ENCODE measurements at regions of chr11 and their contacts with region 1.

Region 1: GRCh38 chr11:64317957-64318693 is at the start of gene PRDX5:
- DNase-seq: peak; percentile 94 to 97
- ATAC-seq: peak; percentile 80 to 85
- H3K4me3 ChIP-seq: peak within 1 kb of the TSS; percentile 73 to 99 (median 91)
- H3K27ac ChIP-seq: peak within 1 kb of the TSS; percentile 88 to 98 (median 94)
- H3K4me1 ChIP-seq: peaks cover 25 to 36% of the 10 kb centered on the region in 2 donors
- H3K27me3 ChIP-seq: no peaks in the 10 kb centered on the region
- CTCF ChIP-seq: peak in 4 of 5 experiments; percentile 34 to 62 (median 56)
- POLR2A ChIP-seq: peak; percentile 73 to 81
- total RNA-seq, gene PRDX5: 170 to 257 (median 219) TPM

Region 2: DNA sequence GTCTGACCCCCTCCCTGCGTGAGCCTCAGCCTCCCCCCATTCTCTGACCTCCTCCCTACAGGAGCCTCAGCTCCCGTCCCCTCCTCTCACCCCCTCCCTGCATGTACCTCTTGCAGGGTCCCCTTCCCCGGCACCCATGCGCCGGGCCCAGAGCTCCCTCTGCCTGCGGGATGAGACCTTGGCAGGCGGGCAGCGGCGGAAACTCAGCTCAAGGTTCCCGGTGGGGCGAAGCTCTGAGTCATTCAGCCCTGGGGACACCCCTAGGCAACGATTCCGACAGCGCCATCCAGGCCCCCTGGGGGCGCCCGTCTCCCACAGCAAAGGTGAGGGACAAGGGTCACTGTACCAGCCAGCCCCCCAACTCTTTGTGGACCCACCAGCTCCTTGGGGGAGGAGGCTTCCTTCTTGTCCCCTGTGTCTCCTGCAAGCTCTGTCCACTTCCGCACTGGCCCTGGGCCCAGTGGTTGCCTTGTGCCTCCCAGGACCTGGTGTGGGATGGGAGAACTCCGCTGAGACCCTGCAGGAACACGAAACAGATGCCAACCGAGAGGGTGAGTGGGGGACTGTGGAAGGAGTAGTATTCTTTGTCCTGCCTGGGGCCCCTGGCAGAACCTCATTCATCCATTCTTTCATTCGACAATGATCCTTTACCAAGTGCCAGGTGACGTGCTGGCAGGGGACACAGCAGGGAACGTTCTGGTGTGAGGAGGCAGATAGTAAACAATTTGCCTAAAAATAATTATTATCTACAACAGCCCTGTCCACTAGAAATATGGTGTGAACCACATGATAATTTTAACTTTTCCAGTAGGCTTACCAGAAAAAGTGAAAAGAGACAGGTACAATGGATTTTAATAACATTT is 37.2 kb after region 1 on chr11:
- in situ Hi-C with region 1: no loop called
- intact Hi-C with region 1: loop called (anchors 1 kb)
- DNase-seq: peak; percentile 40 to 75
- ATAC-seq: peak; percentile 55 to 63
- H3K4me3 ChIP-seq: peak overlapping the region; percentile 18 to 53 (median 46)
- H3K27ac ChIP-seq: peak overlapping the region; percentile 59 to 67 (median 62)
- H3K4me1 ChIP-seq: peaks cover 5 to 26% of the 10 kb centered on the region in 2 donors
- H3K27me3 ChIP-seq: peaks cover 0 to 7% (median 5%) of the 10 kb centered on the region in 3 donors
- CTCF ChIP-seq: peak; percentile 59 to 78 (median 69)
- POLR2A ChIP-seq: no peak